ENCODE measurements at regions of chr18 and their contacts with region 1.

Region 1: DNA sequence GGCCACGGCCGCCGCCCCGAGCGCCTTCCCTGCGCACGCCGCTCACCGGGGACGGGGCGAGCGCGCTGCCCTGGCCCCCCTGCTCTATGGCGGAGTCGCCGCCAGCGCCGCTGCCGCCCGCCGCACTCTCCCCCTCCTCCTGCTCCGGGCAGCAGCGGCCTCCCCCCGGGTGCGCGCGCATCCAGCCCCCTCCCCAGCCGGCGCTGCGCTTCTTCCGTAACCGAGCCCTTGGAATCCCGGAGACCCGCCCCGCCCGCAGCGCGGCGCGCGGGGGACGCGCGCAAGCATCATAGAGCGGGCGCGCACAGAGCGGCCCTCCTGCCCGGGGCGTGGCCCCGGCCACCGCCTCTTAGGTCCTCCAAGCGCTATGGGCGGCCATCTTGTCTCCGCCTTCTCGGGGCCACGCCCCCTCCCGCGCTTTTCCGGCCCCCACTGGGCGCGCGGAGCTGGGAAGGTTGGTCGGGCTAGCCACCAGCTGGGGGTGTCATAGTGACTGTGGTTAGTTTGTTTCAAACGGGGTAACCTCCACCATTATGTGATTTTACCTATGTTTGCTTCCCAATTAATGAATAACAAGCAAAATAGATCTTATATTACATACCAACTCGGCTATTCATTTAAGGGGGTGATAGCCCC is at the start of gene MBD2:
- DNase-seq: peak; percentile 90 to 96 (median 93)
- H3K4me3 ChIP-seq: peak within 1 kb of the TSS; percentile 38
- H3K4me3 Mint-ChIP-seq: peak within 1 kb of the TSS; percentile 93 to 98 (median 95)
- H3K27ac ChIP-seq: peak within 1 kb of the TSS; percentile 41
- H3K27ac Mint-ChIP-seq: peak within 1 kb of the TSS; percentile 89 to 99 (median 98)
- H3K4me1 ChIP-seq: peaks cover 23% of the 10 kb centered on the region
- H3K4me1 Mint-ChIP-seq: peaks cover 38 to 46% (median 43%) of the 10 kb centered on the region in 3 donors
- H3K27me3 ChIP-seq: no peaks in the 10 kb centered on the region
- H3K27me3 Mint-ChIP-seq: peaks cover 0 to 4% of the 10 kb centered on the region in 2 donors
- total RNA-seq, gene MBD2: 195 to 201 TPM

Region 2: DNA sequence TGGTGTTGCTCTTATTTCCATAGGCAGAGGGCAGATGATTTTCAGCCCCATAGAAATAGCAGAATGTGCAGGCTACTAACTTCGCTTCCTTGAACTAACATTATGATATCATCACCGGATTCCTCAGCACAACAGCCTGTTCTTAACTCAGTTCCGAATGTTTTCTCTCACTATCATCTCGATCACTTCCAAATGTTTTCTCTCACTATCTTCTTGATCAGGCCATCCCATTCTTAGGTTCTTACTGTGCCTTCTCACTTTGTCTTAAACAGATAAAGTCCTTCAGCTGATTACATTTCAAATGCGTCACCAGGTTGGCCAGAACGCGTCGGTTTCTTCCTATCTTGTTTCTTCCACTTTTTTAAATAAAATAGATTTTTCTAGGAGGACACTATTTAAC is 11.4 kb after region 1 on chr18:
- CTCF ChIA-PET with region 1: no interaction called
- POLR2A ChIA-PET with region 1: no interaction called
- DNase-seq: no peak
- H3K4me3 ChIP-seq: no peak overlapping the region
- H3K4me3 Mint-ChIP-seq: no peak overlapping the region
- H3K27ac ChIP-seq: no peak overlapping the region
- H3K27ac Mint-ChIP-seq: no peak overlapping the region
- H3K4me1 ChIP-seq: no peaks in the 10 kb centered on the region
- H3K4me1 Mint-ChIP-seq: no peaks in the 10 kb centered on the region
- H3K27me3 ChIP-seq: no peaks in the 10 kb centered on the region
- H3K27me3 Mint-ChIP-seq: no peaks in the 10 kb centered on the region

Region 3: GRCh38 chr18:54357660-54358494 is 133.4 kb after region 1 on chr18 and contains the starts of genes C18orf54 and STARD6:
- CTCF ChIA-PET with region 1: interaction called, 10 read pairs
- POLR2A ChIA-PET with region 1: interaction called, 5 read pairs
- DNase-seq: peak; percentile 84 to 93 (median 90)
- H3K4me3 ChIP-seq: peak within 1 kb of the TSS; percentile 95
- H3K4me3 Mint-ChIP-seq: peak within 1 kb of the TSS; percentile 95 to 100 (median 97)
- H3K27ac ChIP-seq: peak within 1 kb of the TSS; percentile 81
- H3K27ac Mint-ChIP-seq: peak within 1 kb of the TSS; percentile 80 to 99 (median 96)
- H3K4me1 ChIP-seq: peaks cover 12% of the 10 kb centered on the region
- H3K4me1 Mint-ChIP-seq: peaks cover 16 to 23% (median 22%) of the 10 kb centered on the region in 3 donors
- H3K27me3 ChIP-seq: no peaks in the 10 kb centered on the region
- H3K27me3 Mint-ChIP-seq: peaks cover 0 to 3% of the 10 kb centered on the region in 2 donors
- total RNA-seq, gene C18orf54: 10.1 to 10.6 TPM
- total RNA-seq, gene STARD6: 0.46 TPM in 1 of 2 experiments, not detected in the other

Measured in CD8-positive, alpha-beta memory T cell (primary cell).